A673 (cell line): ENCODE measurements at regions of chr2 and their contacts with region 1.

Region 1: DNA sequence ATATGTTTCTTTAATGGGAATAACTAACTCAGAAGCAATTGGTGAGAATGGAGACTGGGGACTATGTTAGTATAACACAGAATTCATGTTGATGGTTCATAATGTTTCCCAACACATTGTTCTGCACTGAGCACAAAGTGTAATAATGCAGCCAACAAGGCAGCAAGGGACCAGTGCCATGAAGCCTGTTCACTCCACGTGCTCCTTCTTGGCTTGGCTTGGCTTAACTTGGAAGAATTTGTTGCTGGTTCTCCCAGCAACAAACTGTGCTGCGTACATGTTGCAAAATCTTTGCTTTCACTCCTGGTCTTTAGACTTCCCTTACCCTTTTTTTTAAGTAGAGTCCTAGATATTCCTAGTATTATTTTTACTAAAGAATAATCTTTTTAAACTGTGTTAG is 129.7 kb downstream of the MAP3K20 start:
- DNase-seq: no peak
- H3K4me3 ChIP-seq: no peak overlapping the region
- H3K27ac ChIP-seq: no peak overlapping the region
- H3K4me1 ChIP-seq: peaks cover 2% of the 10 kb centered on the region
- H3K27me3 ChIP-seq: no peaks in the 10 kb centered on the region
- CTCF ChIP-seq: no peak

Region 2: DNA sequence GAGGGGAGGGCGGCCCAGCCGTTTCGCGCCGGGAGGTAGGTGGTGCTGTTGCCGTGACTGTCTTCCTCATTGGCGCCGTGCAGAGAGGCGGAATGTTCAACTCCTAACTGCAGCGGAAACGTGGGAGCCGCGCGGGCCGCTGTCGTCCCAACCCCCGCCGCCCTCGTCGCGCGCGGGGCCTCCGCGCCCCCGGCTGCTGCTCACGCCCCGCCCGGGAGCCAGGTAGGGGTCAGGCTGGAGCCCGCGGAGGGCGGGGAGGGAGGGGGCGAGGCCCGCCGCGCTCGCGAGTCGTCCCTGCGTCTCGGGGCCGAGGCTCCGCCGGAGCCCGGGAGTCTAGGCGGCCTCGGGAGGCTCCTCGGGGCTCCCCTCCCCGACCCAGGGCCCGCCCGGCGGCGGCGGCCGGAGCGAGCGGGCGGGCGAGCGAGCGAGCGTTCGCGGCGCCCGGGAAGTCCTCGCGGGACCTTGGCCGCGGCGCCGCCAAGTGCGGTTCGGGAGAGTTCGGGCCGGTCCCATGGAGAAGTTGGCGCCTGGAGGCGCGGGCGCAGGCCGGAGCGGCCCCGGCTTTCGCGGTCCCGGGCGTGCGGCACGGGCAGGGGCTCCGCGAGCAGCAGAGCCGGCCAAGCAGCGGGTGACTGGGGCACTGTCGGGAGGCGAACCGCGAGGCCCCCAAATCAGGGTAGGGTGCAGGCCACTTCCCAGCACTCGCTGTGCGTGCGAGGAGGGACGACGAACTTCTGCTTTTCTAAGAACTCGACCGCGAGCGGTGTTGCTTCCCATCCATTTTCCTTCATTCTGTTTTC is 129.4 kb before region 1 on chr2 and contains the start of gene MAP3K20:
- CTCF ChIA-PET with region 1: interaction called, 3 read pairs
- POLR2A ChIA-PET with region 1: no interaction called
- intact Hi-C with region 1: loop called (anchors 5 kb)
- DNase-seq: peak; percentile 83
- H3K4me3 ChIP-seq: peak within 1 kb of the TSS; percentile 76
- H3K27ac ChIP-seq: peak within 1 kb of the TSS; percentile 95
- H3K4me1 ChIP-seq: peaks cover 16% of the 10 kb centered on the region
- H3K27me3 ChIP-seq: no peaks in the 10 kb centered on the region
- CTCF ChIP-seq: peak; percentile 51
- total RNA-seq, gene MAP3K20: 40.0 and 43.7 TPM in 2 replicates

Region 3: GRCh38 chr2:173175222-173175621 is 30.2 kb before region 1 on chr2:
- CTCF ChIA-PET with region 1: no interaction called
- POLR2A ChIA-PET with region 1: no interaction called
- intact Hi-C with region 1: no loop called
- DNase-seq: no peak
- H3K4me3 ChIP-seq: no peak overlapping the region
- H3K27ac ChIP-seq: no peak overlapping the region
- H3K4me1 ChIP-seq: peaks cover 7% of the 10 kb centered on the region
- H3K27me3 ChIP-seq: no peaks in the 10 kb centered on the region
- CTCF ChIP-seq: no peak

Region 4: DNA sequence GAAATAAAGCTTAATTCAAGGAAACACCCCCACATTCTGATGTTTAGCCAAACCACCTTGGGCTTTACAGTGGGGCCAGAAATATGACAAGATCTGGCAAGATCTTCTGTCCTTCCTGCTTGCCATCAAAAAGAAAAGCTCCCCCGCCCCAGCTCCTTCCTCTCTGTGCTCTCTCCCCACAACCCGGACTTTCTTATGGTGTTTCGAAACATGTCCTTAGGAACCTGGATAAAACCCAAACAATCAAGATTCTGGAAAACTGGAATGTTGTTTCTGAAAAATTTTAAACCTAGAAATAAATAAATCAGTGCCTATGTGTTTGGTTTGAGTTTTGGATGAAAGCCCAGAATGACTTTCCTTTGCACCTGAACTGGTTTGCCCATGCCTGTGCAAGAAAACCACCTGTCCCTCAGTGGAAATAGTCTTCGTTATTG is 623.3 kb after region 1 on chr2:
- CTCF ChIA-PET with region 1: no interaction called
- POLR2A ChIA-PET with region 1: no interaction called
- intact Hi-C with region 1: no loop called
- DNase-seq: no peak
- H3K4me3 ChIP-seq: no peak overlapping the region
- H3K27ac ChIP-seq: no peak overlapping the region
- H3K4me1 ChIP-seq: no peaks in the 10 kb centered on the region
- H3K27me3 ChIP-seq: no peaks in the 10 kb centered on the region
- CTCF ChIP-seq: no peak